Mammary epithelial cell (primary cell): ENCODE measurements at regions of chr9 and their contacts with region 1.

Region 1: DNA sequence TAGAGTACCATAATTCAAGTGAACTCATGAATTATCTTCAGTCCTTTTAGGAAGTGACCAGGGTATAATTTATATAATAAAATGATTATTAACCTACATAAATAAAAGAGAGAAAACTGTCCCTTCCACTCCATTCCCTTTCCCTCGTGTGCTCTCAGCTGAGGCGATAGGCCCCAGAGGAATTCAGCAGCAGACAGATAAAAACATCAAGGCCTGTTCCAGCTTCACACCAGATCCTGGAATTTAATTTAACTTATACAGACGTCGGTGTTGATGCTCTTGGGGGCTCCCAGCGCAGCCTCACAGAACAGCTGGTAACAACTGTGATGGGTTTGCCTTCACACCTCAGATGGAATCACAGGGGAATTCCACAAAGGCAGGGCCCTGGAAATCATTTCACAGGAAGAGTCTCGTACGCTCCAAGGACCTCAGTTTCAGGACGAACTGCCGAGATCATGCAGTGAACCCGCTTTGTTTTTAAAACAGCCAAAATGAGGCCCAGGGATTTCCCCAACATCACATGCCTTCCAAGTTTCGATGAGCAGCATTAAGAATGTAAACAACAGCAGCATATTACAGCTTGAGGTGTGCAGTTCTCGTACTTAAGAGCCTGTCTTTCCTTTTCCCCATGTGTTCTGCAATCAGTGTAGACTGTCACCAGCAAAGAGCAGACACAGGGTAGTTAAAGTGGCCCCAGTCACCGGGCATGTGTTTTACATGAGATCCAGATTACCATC is 73.6 kb upstream of the ALDH1B1 start:
- DNase-seq: peak; percentile 30
- H3K4me3 ChIP-seq: no peak overlapping the region
- H3K27ac ChIP-seq: no peak overlapping the region
- H3K4me1 ChIP-seq: no peaks in the 10 kb centered on the region
- H3K27me3 ChIP-seq: peaks cover 4% of the 10 kb centered on the region
- CTCF ChIP-seq: no peak

Region 2: GRCh38 chr9:38141746-38142591 is 177.0 kb before region 1 on chr9:
- CTCF ChIA-PET with region 1: no interaction called
- dilution Hi-C with region 1: loop called (anchors 25 kb)
- in situ Hi-C with region 1: no loop called
- intact Hi-C with region 1: no loop called
- DNase-seq: peak; percentile 70
- H3K4me3 ChIP-seq: no peak overlapping the region
- H3K27ac ChIP-seq: no peak overlapping the region
- H3K4me1 ChIP-seq: peaks cover 20% of the 10 kb centered on the region
- H3K27me3 ChIP-seq: no peaks in the 10 kb centered on the region
- CTCF ChIP-seq: no peak

Region 3: DNA sequence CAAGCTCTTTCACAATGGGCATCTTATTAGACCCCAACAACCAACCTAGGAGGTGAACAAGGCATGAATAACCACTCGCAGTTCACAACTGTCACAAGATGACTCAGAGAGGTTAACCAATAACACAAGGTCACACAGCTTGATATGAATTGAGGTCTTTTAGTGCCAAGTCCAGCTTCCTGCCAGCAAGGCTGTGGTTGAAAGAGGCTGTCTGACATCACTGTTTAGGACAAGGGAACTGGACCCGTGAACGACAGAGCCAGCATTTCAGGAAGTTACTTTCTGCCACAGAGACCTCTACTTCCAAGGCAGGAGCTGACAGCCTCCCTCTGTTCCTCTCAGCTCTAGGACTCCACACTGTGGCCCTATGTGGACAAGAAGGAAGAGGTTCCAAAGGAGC is 20.2 kb after region 1 on chr9:
- CTCF ChIA-PET with region 1: no interaction called
- dilution Hi-C with region 1: no loop called
- in situ Hi-C with region 1: no loop called
- intact Hi-C with region 1: no loop called
- DNase-seq: peak; percentile 60
- H3K4me3 ChIP-seq: no peak overlapping the region
- H3K27ac ChIP-seq: no peak overlapping the region
- H3K4me1 ChIP-seq: peaks cover 4% of the 10 kb centered on the region
- H3K27me3 ChIP-seq: no peaks in the 10 kb centered on the region
- CTCF ChIP-seq: no peak

Region 4: GRCh38 chr9:38362852-38363593 is 44.1 kb after region 1 on chr9:
- CTCF ChIA-PET with region 1: no interaction called
- dilution Hi-C with region 1: no loop called
- in situ Hi-C with region 1: no loop called
- intact Hi-C with region 1: no loop called
- DNase-seq: peak; percentile 61
- H3K4me3 ChIP-seq: no peak overlapping the region
- H3K27ac ChIP-seq: no peak overlapping the region
- H3K4me1 ChIP-seq: peaks cover 3% of the 10 kb centered on the region
- H3K27me3 ChIP-seq: no peaks in the 10 kb centered on the region
- CTCF ChIP-seq: peak; percentile 60 to 71

Region 5: DNA sequence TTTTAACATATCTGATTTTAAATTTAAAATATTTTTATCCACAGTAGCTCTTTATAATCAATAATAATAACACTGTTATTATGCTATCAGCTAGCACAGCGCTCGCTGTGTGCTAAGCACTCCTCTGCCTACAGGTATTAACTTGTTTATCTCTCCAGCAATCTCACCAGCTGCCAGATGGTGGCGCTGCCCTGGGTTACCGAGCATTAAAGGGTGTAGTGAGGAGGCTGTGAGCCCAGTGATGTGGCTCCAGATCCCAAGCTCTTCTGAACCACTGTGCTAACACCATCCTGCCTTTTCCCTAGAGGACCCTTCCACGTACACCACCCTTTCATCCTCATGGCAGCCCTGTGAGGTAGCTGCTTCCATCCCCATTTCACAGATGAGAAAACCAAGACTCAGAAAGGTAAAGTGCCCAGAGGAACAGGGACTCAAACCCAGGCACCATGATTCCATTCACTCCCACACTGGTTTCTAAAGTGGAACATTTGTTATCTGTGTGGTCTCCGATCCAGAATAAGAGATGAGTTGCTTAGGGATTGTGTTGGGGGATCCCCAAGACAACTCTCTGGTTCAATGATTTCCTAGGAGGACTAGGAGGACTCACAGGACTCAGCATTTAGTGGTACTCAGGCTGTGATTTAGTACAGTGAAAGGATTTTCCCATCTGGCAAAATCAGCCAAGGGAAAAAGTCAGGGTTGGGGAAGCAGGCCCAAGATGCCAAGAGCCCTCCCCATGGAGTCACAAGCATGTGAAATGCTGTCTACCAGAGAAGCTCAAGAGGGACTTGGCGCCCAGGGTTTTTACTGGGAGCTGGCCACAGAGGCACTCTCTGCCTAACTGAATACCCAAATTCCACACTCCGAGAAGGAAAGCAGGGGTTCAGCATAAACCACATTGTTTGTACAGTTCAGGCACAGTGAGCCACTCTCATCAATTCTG is 98.3 kb after region 1 on chr9:
- CTCF ChIA-PET with region 1: no interaction called
- dilution Hi-C with region 1: no loop called
- in situ Hi-C with region 1: loop called in 1 of 2 experiments (anchors 25 kb)
- intact Hi-C with region 1: no loop called
- DNase-seq: peak; percentile 17
- H3K4me3 ChIP-seq: no peak overlapping the region
- H3K27ac ChIP-seq: no peak overlapping the region
- H3K4me1 ChIP-seq: no peaks in the 10 kb centered on the region
- H3K27me3 ChIP-seq: no peaks in the 10 kb centered on the region
- CTCF ChIP-seq: peak; percentile 69 to 79

Region 6: DNA sequence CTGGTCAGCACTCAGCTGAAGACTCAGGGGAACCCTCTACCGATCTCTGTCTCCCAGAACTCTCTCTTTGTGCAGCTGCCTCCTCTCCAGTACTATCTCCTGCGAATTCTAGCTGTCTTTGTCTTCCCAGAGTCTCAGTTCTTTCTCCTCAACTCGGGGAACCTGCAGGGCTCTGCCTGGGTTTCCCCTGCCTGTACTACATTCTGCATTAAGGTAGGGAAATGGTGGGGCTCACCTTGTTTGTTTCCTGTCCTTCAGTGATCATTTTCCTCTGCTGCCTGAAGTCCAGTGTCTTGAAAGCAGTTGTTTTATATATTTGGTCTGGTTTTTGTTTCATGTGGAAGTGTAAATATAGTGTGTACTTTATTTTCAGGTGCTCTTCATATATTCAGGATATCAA is 148.5 kb after region 1 on chr9:
- CTCF ChIA-PET with region 1: no interaction called
- dilution Hi-C with region 1: loop called (anchors 25 kb)
- in situ Hi-C with region 1: no loop called
- intact Hi-C with region 1: no loop called
- DNase-seq: no peak
- H3K4me3 ChIP-seq: no peak overlapping the region
- H3K27ac ChIP-seq: no peak overlapping the region
- H3K4me1 ChIP-seq: no peaks in the 10 kb centered on the region
- H3K27me3 ChIP-seq: peaks cover 1% of the 10 kb centered on the region
- CTCF ChIP-seq: no peak